Activated CD4-positive, alpha-beta T cell treated with anti-CD3 and anti-CD28 coated beads for 36 hours (primary cell): ENCODE measurements at regions of chr1 and their contacts with region 1.

Region 1: GRCh38 chr1:65148548-65149350 is 746 bp downstream of the AK4 start:
- DNase-seq: peak; percentile 88
- ATAC-seq: peak; percentile 78
- H3K4me3 Mint-ChIP-seq: peak overlapping the region; percentile 85
- H3K27ac Mint-ChIP-seq: peak overlapping the region; percentile 82
- H3K4me1 Mint-ChIP-seq: peaks cover 15% of the 10 kb centered on the region
- H3K27me3 Mint-ChIP-seq: peaks cover 43% of the 10 kb centered on the region

Region 2: GRCh38 chr1:63593303-63593885 is 1555.4 kb before region 1 on chr1 and contains the start of gene PGM1:
- CTCF ChIA-PET with region 1: no interaction called
- POLR2A ChIA-PET with region 1: no interaction called
- intact Hi-C with region 1: loop called in 1 of 2 experiments (anchors 2 kb)
- DNase-seq: peak; percentile 89
- ATAC-seq: peak; percentile 85
- H3K4me3 Mint-ChIP-seq: peak within 1 kb of the TSS; percentile 97
- H3K27ac Mint-ChIP-seq: peak within 1 kb of the TSS; percentile 96
- H3K4me1 Mint-ChIP-seq: peaks cover 27% of the 10 kb centered on the region
- H3K27me3 Mint-ChIP-seq: no peaks in the 10 kb centered on the region
- total RNA-seq, gene PGM1: 38.8 to 43.8 TPM

Region 3: DNA sequence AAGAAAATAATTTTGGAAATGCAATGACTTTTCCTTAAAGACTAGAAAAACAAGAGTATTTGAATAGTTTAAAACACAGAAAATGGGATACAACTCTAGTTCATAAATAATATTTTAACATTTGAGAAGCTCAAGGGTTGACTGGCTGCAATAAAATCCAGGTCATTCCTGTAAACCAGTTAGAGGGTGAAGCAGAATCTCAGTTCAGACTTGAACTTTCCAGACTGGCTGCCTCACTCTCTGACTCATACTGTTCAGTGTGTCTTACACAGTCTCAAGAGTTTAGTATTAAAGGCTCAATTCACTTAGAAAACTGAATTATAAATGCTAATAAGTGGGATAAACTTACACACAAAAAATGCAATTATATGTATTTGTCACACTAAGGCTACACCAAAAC is 314.0 kb before region 1 on chr1:
- CTCF ChIA-PET with region 1: interaction called, 4 read pairs
- POLR2A ChIA-PET with region 1: no interaction called
- intact Hi-C with region 1: loop called in 1 of 2 experiments (anchors 5 kb)
- DNase-seq: no peak
- ATAC-seq: peak; percentile 67
- H3K4me3 Mint-ChIP-seq: no peak overlapping the region
- H3K27ac Mint-ChIP-seq: no peak overlapping the region
- H3K4me1 Mint-ChIP-seq: peaks cover 9% of the 10 kb centered on the region
- H3K27me3 Mint-ChIP-seq: no peaks in the 10 kb centered on the region

Region 4: GRCh38 chr1:65209005-65209885 is 60.5 kb after region 1 on chr1:
- CTCF ChIA-PET with region 1: no interaction called
- POLR2A ChIA-PET with region 1: no interaction called
- intact Hi-C with region 1: loop called in 1 of 2 experiments (anchors 2 kb)
- DNase-seq: peak; percentile 20
- ATAC-seq: no peak
- H3K4me3 Mint-ChIP-seq: no peak overlapping the region
- H3K27ac Mint-ChIP-seq: no peak overlapping the region
- H3K4me1 Mint-ChIP-seq: peaks cover 25% of the 10 kb centered on the region
- H3K27me3 Mint-ChIP-seq: peaks cover 4% of the 10 kb centered on the region

Region 5: GRCh38 chr1:65419681-65420589 is 271.2 kb after region 1 on chr1:
- CTCF ChIA-PET with region 1: no interaction called
- POLR2A ChIA-PET with region 1: no interaction called
- intact Hi-C with region 1: loop called in 1 of 2 experiments (anchors 2 kb)
- DNase-seq: peak; percentile 99
- ATAC-seq: peak; percentile 96
- H3K4me3 Mint-ChIP-seq: no peak overlapping the region
- H3K27ac Mint-ChIP-seq: peak overlapping the region; percentile 94
- H3K4me1 Mint-ChIP-seq: peaks cover 13% of the 10 kb centered on the region
- H3K27me3 Mint-ChIP-seq: no peaks in the 10 kb centered on the region